ENCODE measurements at regions of chr1 and their contacts with region 1.

Region 1: GRCh38 chr1:37807555-37808368 is at the starts of genes C1orf122 and YRDC:
- DNase-seq: peak; percentile 94 to 97 (median 96)
- ATAC-seq: peak; percentile 91 to 96 (median 96)
- H3K4me3 ChIP-seq: peak within 1 kb of the TSS; percentile 72 to 99 (median 91)
- H3K27ac ChIP-seq: peak within 1 kb of the TSS; percentile 90 to 99 (median 96)
- H3K4me1 ChIP-seq: peaks cover 8 to 41% (median 28%) of the 10 kb centered on the region in 12 donors
- H3K27me3 ChIP-seq: no peaks in the 10 kb centered on the region
- CTCF ChIP-seq: no peak
- POLR2A ChIP-seq: peak in 1 of 2 donors; percentile 72
- total RNA-seq, gene C1orf122: 29.1 to 93.0 (median 44.0) TPM
- total RNA-seq, gene YRDC: 4.0 to 8.9 (median 6.1) TPM

Region 2: GRCh38 chr1:37673920-37674319 is 133.8 kb before region 1 on chr1:
- intact Hi-C with region 1: no loop called
- DNase-seq: no peak
- ATAC-seq: no peak
- H3K4me3 ChIP-seq: no peak overlapping the region
- H3K27ac ChIP-seq: no peak overlapping the region
- H3K4me1 ChIP-seq: peaks cover 0 to 4% (median 0%) of the 10 kb centered on the region in 12 donors
- H3K27me3 ChIP-seq: peaks cover 0 to 38% (median 5%) of the 10 kb centered on the region in 9 donors
- CTCF ChIP-seq: no peak
- POLR2A ChIP-seq: no peak

Region 3: GRCh38 chr1:37752583-37753471 is 54.9 kb before region 1 on chr1:
- intact Hi-C with region 1: no loop called
- DNase-seq: no peak
- ATAC-seq: peak in 2 of 4 donors; percentile 53 to 61
- H3K4me3 ChIP-seq: peak overlapping the region in 7 of 12 donors; percentile 3 to 49 (median 30)
- H3K27ac ChIP-seq: no peak overlapping the region
- H3K4me1 ChIP-seq: peaks cover 0 to 17% (median 0%) of the 10 kb centered on the region in 12 donors
- H3K27me3 ChIP-seq: peaks cover 8 to 82% (median 52%) of the 10 kb centered on the region in 9 donors
- CTCF ChIP-seq: no peak
- POLR2A ChIP-seq: no peak

Region 4: GRCh38 chr1:37859507-37860345 is 52.0 kb after region 1 on chr1 and contains the start of gene MTF1:
- intact Hi-C with region 1: loop called in 7 of 10 experiments (anchors 1 to 10 kb)
- DNase-seq: peak; percentile 98 to 99 (median 98)
- ATAC-seq: peak; percentile 99
- H3K4me3 ChIP-seq: peak within 1 kb of the TSS; percentile 60 to 98 (median 86)
- H3K27ac ChIP-seq: peak within 1 kb of the TSS; percentile 22 to 97 (median 93)
- H3K4me1 ChIP-seq: peaks cover 0 to 47% (median 32%) of the 10 kb centered on the region in 12 donors
- H3K27me3 ChIP-seq: no peaks in the 10 kb centered on the region
- CTCF ChIP-seq: peak; percentile 85 to 97 (median 92)
- POLR2A ChIP-seq: peak in 1 of 2 donors; percentile 87
- total RNA-seq, gene MTF1: 4.2 to 19.5 (median 12.4) TPM

Region 5: DNA sequence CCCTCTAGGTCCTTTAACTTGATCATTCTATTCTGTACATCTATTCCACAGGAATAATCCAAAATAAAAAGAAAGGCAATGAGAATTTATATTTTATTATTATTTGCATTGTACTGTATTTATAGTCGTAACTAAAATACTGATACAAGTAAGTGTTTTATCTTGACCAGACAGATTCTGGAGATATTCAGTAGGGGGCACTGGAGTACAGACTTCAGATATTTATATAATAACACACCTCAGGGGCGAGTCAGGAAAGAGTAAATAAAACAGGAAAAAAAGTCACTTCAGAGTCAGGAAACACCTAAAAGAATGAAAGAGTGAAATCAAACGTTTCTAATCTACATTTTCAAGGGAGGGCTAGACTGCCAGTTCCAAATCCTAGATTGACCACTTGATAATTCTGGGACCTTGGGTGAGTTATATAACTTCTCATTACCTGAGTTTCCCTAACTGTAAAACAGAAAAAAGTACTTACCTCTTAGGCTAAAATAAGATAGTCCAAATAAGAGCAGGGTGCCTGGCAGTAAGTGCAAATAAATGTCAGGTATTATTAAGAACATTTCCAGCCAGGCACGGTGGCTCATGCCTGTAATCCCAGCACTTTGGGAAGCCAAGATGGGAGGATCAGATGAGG is 82.7 kb after region 1 on chr1:
- intact Hi-C with region 1: no loop called
- DNase-seq: no peak
- ATAC-seq: no peak
- H3K4me3 ChIP-seq: no peak overlapping the region
- H3K27ac ChIP-seq: peak overlapping the region in 1 of 12 donors; percentile 35
- H3K4me1 ChIP-seq: peaks cover 0 to 3% (median 0%) of the 10 kb centered on the region in 12 donors
- H3K27me3 ChIP-seq: no peaks in the 10 kb centered on the region
- CTCF ChIP-seq: peak in 11 of 12 donors; percentile 31 to 68 (median 49)
- POLR2A ChIP-seq: no peak